OCI-LY7 (cell line): ENCODE measurements at regions of chr1 and their contacts with region 1.

Region 1: GRCh38 chr1:101238681-101239094 is 1.9 kb downstream of the S1PR1 start:
- DNase-seq: peak; percentile 78
- H3K4me3 ChIP-seq: no peak overlapping the region
- H3K27ac ChIP-seq: no peak overlapping the region
- H3K4me1 ChIP-seq: peaks cover 38% of the 10 kb centered on the region
- CTCF ChIP-seq: peak; percentile 97

Region 2: DNA sequence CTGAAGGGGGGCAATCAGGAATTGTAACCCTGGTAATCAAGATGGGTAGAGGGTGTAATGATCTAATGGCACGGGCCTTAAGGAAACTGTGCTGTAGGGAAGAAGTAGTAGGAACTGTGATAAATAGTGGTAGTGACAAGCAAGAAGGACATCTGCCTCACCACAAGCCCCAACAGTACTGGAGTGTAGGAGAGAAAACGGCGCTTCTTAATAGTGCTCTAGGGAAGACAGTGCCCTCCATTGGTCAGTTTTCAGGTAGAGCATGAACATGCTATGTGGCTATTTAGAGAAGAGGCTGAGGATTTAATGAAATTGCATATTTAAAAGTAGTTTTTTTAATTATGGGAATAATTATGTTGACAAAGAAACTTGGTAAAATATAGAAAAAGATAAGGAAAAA is 310.6 kb before region 1 on chr1:
- CTCF ChIA-PET with region 1: no interaction called
- POLR2A ChIA-PET with region 1: no interaction called
- intact Hi-C with region 1: loop called (anchors 5 kb)
- DNase-seq: no peak
- H3K4me3 ChIP-seq: no peak overlapping the region
- H3K27ac ChIP-seq: no peak overlapping the region
- H3K4me1 ChIP-seq: no peaks in the 10 kb centered on the region
- CTCF ChIP-seq: peak; percentile 45

Region 3: DNA sequence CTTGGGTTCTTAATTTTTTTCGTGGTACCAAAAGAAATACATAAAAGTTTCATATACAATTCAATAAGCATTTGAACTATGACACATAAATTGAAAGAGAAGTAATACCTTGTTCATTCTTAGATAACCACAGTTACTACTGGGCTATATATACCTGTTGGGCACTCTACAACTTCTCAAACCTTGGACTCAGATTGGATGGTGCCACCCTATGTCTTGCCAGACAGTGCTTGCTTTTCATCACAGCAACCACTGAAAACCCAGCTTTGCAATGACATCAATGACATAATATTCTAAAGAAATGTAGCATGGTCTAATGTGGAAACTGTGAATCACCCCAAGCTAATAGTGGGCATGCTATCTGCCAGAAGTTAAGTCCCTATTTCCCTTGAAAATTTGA is 150.3 kb before region 1 on chr1:
- CTCF ChIA-PET with region 1: no interaction called
- POLR2A ChIA-PET with region 1: no interaction called
- intact Hi-C with region 1: no loop called
- DNase-seq: no peak
- H3K4me3 ChIP-seq: no peak overlapping the region
- H3K27ac ChIP-seq: no peak overlapping the region
- H3K4me1 ChIP-seq: no peaks in the 10 kb centered on the region
- CTCF ChIP-seq: no peak

Region 4: DNA sequence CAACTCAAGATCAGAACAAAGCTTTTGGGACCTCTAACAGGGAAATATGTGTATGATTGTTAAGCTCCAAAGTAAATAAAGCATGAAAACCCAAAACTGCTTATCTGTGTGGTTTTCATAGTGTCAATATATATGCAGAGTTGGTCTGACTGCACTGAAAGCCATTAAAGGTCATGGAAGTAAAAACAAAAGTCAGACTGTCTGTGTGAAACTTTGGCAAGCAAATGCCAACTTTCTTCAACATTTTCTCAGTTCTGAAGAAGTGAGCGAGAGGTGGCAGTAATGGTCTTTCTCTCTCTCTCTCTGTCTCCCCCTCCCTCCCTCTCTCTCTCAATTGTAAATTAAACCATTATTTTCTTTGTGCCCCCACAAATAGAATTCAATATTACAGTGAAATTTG is 101.9 kb before region 1 on chr1:
- CTCF ChIA-PET with region 1: no interaction called
- POLR2A ChIA-PET with region 1: interaction called, 5 read pairs
- intact Hi-C with region 1: loop called (anchors 5 kb)
- DNase-seq: peak; percentile 42
- H3K4me3 ChIP-seq: no peak overlapping the region
- H3K27ac ChIP-seq: no peak overlapping the region
- H3K4me1 ChIP-seq: peaks cover 3% of the 10 kb centered on the region
- CTCF ChIP-seq: peak; percentile 79

Region 5: GRCh38 chr1:101587741-101588140 is 349.1 kb after region 1 on chr1:
- CTCF ChIA-PET with region 1: no interaction called
- POLR2A ChIA-PET with region 1: no interaction called
- intact Hi-C with region 1: no loop called
- DNase-seq: no peak
- H3K4me3 ChIP-seq: no peak overlapping the region
- H3K27ac ChIP-seq: no peak overlapping the region
- H3K4me1 ChIP-seq: no peaks in the 10 kb centered on the region
- CTCF ChIP-seq: no peak